Spleen (tissue), 13 donors: ENCODE measurements at regions of chr22 and their contacts with region 1.

Region 1: GRCh38 chr22:46312056-46312455 is 15.4 kb downstream of the GTSE1 start:
- DNase-seq: peak; percentile 50
- H3K4me3 ChIP-seq: no peak overlapping the region
- H3K27ac ChIP-seq: no peak overlapping the region
- H3K4me1 ChIP-seq: peaks cover 0 to 4% (median 0%) of the 10 kb centered on the region in 6 donors
- H3K27me3 ChIP-seq: no peaks in the 10 kb centered on the region
- CTCF ChIP-seq: no peak
- POLR2A ChIP-seq: no peak

Region 2: DNA sequence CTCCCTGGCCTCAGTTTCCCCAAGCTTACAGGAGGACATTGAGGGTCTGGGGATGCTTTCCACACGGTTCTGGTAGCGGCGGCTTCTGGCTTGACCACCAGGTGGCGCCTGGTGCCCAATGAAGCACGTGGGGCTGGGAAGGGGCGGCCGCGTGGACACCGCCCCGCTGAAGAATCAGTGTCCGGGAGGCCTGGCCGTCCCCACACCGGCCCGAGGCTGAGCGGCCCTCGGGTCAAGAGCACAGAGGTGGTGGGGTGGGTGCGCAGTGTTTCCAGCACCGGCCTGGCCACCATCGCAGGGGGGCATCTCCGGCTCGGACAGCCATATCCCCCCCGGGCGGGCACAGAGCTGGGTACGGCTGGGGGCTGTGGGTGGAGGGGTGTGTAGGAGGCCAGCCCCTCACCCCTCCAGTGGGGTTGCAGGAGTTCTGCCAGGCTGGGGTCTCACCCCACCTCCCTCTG is 189.5 kb before region 1 on chr22:
- intact Hi-C with region 1: loop called (anchors 2 kb)
- DNase-seq: peak; percentile 93
- H3K4me3 ChIP-seq: peak overlapping the region in 1 of 8 donors; percentile 34
- H3K27ac ChIP-seq: no peak overlapping the region
- H3K4me1 ChIP-seq: peaks cover 3 to 48% (median 16%) of the 10 kb centered on the region in 6 donors
- H3K27me3 ChIP-seq: peaks cover 0 to 4% (median 0%) of the 10 kb centered on the region in 7 donors
- CTCF ChIP-seq: peak; percentile 80 to 97 (median 93)
- POLR2A ChIP-seq: no peak

Region 3: DNA sequence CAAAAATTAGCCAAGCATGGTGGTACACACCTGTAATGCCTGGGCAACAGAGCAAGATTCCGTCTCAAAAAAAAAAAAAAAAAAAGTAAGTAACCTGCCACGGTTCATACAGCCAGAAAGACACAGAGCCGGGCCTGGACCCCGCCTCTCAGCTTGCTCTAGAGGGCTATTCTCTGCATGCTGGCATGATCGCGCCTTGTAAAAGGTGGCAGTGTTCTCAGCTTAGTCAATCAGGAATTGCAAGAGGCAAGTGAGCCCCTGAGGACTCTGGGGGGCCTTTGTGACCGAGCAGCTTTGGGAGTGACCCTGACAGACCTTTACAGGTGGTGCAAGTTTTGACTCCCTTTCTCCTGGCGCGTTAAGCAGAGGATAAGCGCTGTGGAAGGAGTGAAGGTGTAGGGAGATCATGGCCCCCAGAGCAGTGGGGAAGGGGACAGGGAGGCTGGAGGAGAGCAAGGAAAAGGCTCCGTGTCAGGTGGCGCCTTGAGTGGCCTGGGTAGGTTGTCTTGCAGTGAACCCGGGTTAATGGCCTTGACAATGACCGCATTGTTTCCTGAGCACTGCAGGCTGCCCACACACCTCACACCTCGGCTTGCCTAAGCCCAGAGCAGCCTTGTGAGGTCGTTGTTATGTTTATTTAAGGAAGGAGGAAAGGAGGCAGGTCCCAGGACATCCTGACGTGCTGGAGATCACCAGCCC is 110.8 kb before region 1 on chr22:
- intact Hi-C with region 1: no loop called
- DNase-seq: peak; percentile 18
- H3K4me3 ChIP-seq: no peak overlapping the region
- H3K27ac ChIP-seq: no peak overlapping the region
- H3K4me1 ChIP-seq: peaks cover 0 to 10% (median 0%) of the 10 kb centered on the region in 6 donors
- H3K27me3 ChIP-seq: no peaks in the 10 kb centered on the region
- CTCF ChIP-seq: no peak
- POLR2A ChIP-seq: no peak